ENCODE measurements at regions of chr10 and their contacts with region 1.

Region 1: DNA sequence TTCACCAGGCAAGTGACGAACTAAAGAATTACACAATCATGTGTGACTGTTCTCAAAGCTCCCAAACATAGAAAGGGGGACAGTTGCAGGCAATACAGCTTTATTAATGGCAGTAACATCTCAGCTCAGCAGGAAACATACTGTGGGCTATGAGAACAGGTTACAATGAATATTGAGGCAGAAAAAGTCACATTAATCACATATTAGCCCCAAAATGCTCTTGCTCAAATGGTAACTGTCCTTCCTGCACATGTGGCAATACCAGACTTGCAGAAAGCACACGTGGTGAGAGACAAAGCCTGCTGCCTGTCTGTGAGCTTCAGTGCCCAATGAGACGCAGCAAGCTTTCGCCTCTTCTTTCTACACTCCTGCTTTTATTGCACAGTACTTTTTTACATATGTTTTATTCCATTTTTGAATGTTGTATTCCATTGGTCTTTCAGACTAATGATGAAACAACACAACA is 104.9 kb upstream of the ACBD5 start:
- DNase-seq: no peak
- CTCF ChIP-seq: no peak

Region 2: GRCh38 chr10:27360581-27361172 is 15.2 kb after region 1 on chr10:
- CTCF ChIA-PET with region 1: interaction called, 11 read pairs
- POLR2A ChIA-PET with region 1: no interaction called
- DNase-seq: peak; percentile 67
- CTCF ChIP-seq: peak; percentile 93